Common myeloid progenitor, CD34-positive (primary cell): ENCODE measurements at regions of chr4 and their contacts with region 1.

Region 1: DNA sequence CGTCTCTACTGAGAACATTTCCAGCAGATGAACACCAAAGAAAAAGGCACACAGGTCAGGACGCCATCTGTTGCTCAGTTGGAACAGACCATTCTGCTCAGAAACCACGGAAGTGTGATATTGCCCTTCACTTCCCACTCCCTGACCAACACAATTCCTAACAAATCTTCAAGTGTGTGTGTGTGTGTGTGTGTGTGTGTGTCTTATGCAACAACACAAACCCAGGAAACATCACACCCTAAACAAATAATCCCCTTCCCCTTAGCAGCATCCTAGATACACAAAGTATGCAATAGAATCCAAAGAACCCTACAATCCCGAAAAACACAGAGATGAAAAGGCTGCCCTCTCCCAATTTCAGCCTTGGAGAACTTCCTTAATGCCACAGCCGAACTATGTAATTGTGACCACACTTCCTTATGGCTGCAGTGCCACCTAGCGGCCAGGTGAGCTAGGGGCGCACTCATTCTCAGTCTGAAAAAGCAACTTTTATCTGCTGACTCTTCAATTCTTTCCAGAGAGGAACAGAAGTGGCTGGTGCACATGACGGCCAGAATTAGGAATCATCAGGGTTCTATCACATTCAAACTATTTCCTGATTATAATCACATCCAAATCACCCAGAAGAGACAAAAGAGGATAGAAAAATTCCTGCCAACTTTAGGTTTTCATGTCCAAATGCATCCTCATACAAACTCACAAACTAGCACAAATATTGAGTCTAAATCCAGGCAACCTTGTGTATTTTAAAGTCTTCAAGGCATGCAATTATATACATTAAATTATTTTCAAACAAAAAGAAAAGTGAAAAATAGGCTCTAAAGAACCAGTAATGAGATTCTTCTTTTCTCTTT is 164.9 kb downstream of the DHX15 start:
- DNase-seq: peak; percentile 38 to 65 (median 61)
- H3K4me3 ChIP-seq: no peak overlapping the region
- H3K27ac ChIP-seq: no peak overlapping the region
- H3K4me1 ChIP-seq: peaks cover 0 to 2% (median 0%) of the 10 kb centered on the region in 4 experiments
- H3K27me3 ChIP-seq: peaks cover 0 to 7% (median 1%) of the 10 kb centered on the region in 5 experiments

Region 2: DNA sequence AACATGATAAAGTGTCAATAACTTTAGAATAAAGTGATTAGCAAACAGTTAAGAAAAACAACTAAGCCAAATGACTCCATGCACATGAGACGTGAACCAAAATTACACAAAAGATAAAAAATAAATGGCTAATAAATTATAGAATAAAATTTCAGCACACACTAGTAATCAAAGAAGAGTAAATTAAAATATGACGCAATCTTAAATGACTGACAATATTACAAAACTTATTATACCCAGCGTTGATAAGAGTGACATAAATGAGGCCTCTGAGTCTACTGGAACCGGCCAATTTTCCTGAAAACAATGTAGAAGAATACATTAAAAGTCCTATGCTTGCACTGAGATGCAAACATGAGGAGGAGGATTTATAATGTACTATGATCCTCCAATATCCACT is 22.4 kb before region 1 on chr4:
- CTCF ChIA-PET with region 1: no interaction called
- POLR2A ChIA-PET with region 1: no interaction called
- DNase-seq: no peak
- H3K4me3 ChIP-seq: no peak overlapping the region
- H3K27ac ChIP-seq: no peak overlapping the region
- H3K4me1 ChIP-seq: no peaks in the 10 kb centered on the region
- H3K27me3 ChIP-seq: peaks cover 0 to 3% (median 0%) of the 10 kb centered on the region in 5 experiments

Region 3: DNA sequence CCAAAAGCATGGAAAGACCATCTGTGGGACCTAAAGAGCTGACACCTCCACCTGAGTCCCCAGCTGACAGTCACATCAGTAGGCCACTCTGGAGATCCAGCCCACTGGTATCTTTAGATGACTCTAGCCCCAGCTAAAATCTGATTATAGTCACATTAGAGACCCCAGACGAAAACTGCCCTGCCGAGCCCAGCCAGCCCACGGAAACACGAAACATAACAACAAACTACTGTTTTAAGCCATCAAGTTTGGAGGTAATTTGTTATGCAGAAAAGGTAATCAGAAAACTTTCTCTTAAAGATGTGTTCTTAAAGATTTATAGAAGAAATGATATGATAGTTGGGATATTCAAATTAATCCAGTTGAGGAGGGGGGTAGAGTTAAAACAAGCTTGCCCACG is 10.8 kb before region 1 on chr4:
- CTCF ChIA-PET with region 1: interaction called, 10 read pairs
- POLR2A ChIA-PET with region 1: no interaction called
- DNase-seq: no peak
- H3K4me3 ChIP-seq: no peak overlapping the region
- H3K27ac ChIP-seq: no peak overlapping the region
- H3K4me1 ChIP-seq: no peaks in the 10 kb centered on the region
- H3K27me3 ChIP-seq: peaks cover 2 to 18% (median 11%) of the 10 kb centered on the region in 5 experiments

Region 4: DNA sequence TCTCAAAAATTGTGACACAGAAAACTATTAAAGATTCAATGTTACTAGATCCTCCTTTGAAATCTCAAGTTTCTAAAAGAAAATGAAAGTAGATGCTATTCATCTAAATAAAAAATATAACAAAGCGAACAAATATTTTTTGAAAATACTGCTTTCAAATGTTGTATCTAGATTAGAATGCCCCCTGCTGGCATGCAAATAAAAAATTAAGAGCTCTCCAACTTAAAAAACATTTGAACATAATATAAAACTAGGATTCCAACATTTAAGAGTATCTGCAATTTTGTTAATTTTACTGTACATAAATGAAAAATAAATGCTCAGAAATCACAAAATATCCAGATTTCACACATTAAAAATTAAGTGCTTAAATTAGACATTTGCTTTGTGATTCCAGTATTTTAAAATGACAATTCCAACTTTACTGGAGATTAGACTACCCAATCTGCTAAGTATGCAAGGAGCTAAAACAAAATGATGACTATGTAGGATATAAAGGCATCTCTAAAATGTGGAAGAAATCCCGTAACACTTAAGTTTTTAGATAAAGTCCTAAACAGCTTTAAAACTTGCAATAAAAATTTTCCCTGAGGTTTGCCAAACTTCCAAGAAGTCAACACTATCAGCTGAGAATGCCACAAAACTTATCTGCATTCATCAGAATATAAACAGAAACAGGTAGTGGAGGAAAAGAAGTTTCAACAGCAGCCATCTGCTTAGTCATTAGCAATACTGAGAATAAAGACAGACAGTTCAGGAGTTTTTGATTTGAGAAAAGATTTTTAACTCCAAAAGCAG is 132.3 kb after region 1 on chr4:
- CTCF ChIA-PET with region 1: no interaction called
- POLR2A ChIA-PET with region 1: no interaction called
- DNase-seq: peak; percentile 38 to 68 (median 65)
- H3K4me3 ChIP-seq: no peak overlapping the region
- H3K27ac ChIP-seq: peak overlapping the region in 1 of 2 experiments; percentile 22
- H3K4me1 ChIP-seq: peaks cover 0 to 4% (median 0%) of the 10 kb centered on the region in 4 experiments
- H3K27me3 ChIP-seq: no peaks in the 10 kb centered on the region

Region 5: DNA sequence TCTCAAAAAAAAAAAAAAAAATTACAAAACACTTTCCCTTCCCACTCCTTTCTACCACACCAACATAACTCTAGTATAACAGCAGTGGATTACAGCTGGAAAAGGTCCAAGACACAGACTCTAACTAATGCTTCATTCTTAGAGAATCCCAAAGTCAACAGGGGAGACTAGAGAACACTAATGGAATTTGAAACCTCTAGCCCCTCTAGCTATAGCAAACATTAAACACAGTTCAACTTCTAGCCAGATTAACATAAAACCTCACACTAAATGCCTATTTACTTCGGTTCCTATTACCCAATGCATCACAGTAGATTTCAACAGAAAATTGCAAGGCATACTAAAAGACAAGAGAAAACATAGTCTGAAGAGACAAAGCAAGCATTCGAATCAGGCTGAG is 175.5 kb after region 1 on chr4:
- CTCF ChIA-PET with region 1: no interaction called
- POLR2A ChIA-PET with region 1: no interaction called
- DNase-seq: no peak
- H3K4me3 ChIP-seq: no peak overlapping the region
- H3K27ac ChIP-seq: no peak overlapping the region
- H3K4me1 ChIP-seq: no peaks in the 10 kb centered on the region
- H3K27me3 ChIP-seq: peaks cover 0 to 4% (median 0%) of the 10 kb centered on the region in 5 experiments